Tibial artery (tissue), 4 donors: ENCODE measurements at regions of chr16 and their contacts with region 1.

Region 1: DNA sequence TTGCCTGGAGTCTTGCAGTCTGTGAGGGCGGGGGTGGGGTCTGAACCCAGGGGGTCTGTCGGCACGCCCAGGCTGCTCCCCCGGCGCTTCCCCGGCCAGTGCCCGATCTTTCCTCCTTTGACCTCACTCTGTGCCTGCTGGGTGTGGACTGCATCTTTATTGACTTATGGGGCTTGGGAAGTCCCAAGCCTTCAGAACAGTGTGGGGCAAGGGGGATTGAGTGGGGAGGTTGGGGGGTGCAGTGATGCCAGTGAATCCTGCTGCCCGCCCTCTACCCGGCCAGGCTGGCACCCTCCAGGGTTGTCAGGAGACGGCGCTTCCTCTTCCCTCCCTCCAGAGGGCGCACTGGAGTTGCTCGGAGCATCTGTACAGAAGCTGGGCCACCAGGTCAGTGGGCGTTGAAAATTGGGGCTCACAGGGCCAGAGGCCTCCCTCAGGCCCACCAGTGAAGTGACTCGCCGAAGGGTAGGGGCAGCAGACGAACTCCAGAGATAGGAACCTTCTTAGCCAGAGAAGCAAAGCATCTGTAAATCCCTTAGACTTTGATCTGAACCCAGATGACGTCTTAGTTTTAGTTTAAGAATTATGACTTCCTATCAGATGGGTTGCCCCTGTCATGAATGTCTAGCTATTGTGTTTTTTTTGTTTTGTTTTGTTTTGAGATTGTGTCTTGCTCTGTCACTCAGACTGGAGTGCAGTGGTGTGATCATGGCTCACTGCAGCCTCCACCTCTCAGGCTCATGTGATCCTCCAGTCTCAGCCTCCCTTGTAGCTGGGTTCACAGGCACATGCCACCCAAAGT is 184.8 kb upstream of the CIBAR2 start:
- DNase-seq: no peak
- H3K4me3 ChIP-seq: no peak overlapping the region
- H3K27ac ChIP-seq: no peak overlapping the region
- H3K4me1 ChIP-seq: peaks cover 0 to 9% (median 0%) of the 10 kb centered on the region in 4 donors
- H3K27me3 ChIP-seq: peaks cover 0 to 2% of the 10 kb centered on the region in 2 donors
- CTCF ChIP-seq: peak; percentile 42 to 57

Region 2: DNA sequence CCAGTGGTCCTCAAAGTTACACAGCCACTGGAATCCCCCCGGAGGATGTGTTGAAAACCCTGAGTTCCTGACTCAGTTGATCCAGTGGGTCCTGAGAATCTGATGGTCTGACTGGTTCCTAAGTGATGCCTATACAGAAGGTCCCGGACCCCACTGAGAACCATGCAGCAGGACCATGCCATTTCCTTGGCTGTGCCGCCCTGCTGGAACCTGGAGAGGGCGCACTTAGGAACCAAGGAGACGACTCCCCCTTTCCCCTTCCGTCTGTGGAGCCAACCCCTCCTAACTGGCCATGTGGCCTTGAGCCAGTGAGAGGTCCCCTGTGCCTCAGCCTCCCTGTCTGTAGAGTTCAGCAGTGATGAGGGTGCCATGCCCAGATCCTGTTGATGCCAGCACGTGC is 431.8 kb after region 1 on chr16:
- intact Hi-C with region 1: loop called (anchors 10 kb)
- DNase-seq: no peak
- H3K4me3 ChIP-seq: no peak overlapping the region
- H3K27ac ChIP-seq: no peak overlapping the region
- H3K4me1 ChIP-seq: no peaks in the 10 kb centered on the region
- H3K27me3 ChIP-seq: peaks cover 0 to 66% of the 10 kb centered on the region in 2 donors
- CTCF ChIP-seq: no peak